Ovary (tissue), 10 donors: ENCODE measurements at regions of chr21 and their contacts with region 1.

Region 1: DNA sequence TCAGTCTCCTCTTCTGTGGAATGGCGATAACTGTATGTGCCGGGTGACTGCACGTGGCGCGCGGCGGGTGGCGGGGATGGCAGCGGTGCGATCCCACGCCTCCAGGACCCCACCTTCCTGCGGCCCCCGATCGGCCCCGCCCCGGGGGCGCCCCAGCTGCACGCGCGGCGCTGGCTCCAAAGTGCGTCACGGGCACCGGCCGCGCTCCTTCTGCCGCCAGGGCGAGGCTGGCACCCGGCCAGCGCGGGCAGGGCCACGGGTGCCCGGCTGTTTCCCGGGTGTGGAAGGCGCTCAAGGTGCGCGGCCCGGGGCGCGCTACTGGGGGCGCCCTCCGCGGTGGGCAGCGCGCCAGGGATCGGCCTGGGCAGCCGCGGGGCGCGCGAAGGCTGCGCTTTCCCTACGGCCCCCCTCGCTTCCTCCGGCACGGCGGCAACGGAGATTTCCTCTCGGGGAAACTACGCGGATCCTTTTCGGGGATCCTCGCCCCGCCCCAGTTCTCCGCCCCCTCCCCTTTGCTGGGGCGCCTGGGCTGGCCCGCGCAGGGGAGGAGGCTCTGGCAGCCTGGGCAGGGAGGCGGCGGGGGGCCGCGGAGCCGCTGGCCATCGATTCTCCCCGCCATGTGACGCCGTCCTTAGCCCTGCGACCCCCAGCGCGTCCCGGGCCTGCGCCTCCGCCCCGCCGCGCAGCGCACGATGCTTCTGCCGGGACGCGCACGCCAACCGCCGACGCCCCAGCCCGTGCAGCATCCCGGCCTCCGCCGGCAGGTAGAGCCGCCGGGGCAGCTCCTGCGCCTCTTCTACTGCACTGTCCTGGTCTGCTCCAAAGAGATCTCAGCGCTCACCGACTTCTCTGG is at the start of gene EVA1C:
- DNase-seq: peak; percentile 71 to 86 (median 79)
- H3K4me3 ChIP-seq: peak within 1 kb of the TSS; percentile 59
- H3K27ac ChIP-seq: peak within 1 kb of the TSS; percentile 96 to 99
- H3K4me1 ChIP-seq: peaks cover 9% of the 10 kb centered on the region
- H3K27me3 ChIP-seq: no peaks in the 10 kb centered on the region
- CTCF ChIP-seq: peak in 1 of 3 donors; percentile 75
- EP300 ChIP-seq: no peak
- POLR2A ChIP-seq: peak; percentile 28
- total RNA-seq, gene EVA1C: 27.1 to 156 (median 49.6) TPM

Region 2: GRCh38 chr21:32261929-32262328 is 150.5 kb before region 1 on chr21:
- intact Hi-C with region 1: no loop called
- DNase-seq: no peak
- H3K4me3 ChIP-seq: no peak overlapping the region
- H3K27ac ChIP-seq: no peak overlapping the region
- H3K4me1 ChIP-seq: no peaks in the 10 kb centered on the region
- H3K27me3 ChIP-seq: no peaks in the 10 kb centered on the region
- CTCF ChIP-seq: no peak
- EP300 ChIP-seq: no peak
- POLR2A ChIP-seq: no peak

Region 3: GRCh38 chr21:32457360-32457840 is 45.0 kb after region 1 on chr21:
- intact Hi-C with region 1: loop called in 2 of 4 experiments (anchors 5 kb)
- DNase-seq: peak; percentile 48 to 68 (median 62)
- H3K4me3 ChIP-seq: no peak overlapping the region
- H3K27ac ChIP-seq: peak overlapping the region; percentile 60 to 70
- H3K4me1 ChIP-seq: peaks cover 18% of the 10 kb centered on the region
- H3K27me3 ChIP-seq: no peaks in the 10 kb centered on the region
- CTCF ChIP-seq: peak in 1 of 3 donors; percentile 5
- EP300 ChIP-seq: no peak
- POLR2A ChIP-seq: no peak

Region 4: GRCh38 chr21:32520875-32521735 is 108.7 kb after region 1 on chr21:
- intact Hi-C with region 1: loop called in 1 of 4 experiments (anchors 5 kb)
- DNase-seq: peak; percentile 84 to 91 (median 91)
- H3K4me3 ChIP-seq: no peak overlapping the region
- H3K27ac ChIP-seq: peak overlapping the region; percentile 25 to 33
- H3K4me1 ChIP-seq: peaks cover 7% of the 10 kb centered on the region
- H3K27me3 ChIP-seq: no peaks in the 10 kb centered on the region
- CTCF ChIP-seq: no peak
- EP300 ChIP-seq: peak; percentile 35
- POLR2A ChIP-seq: no peak

Region 5: GRCh38 chr21:32562426-32562825 is 150.0 kb after region 1 on chr21:
- intact Hi-C with region 1: loop called in 2 of 4 experiments (anchors 5 kb)
- DNase-seq: peak; percentile 55 to 73 (median 63)
- H3K4me3 ChIP-seq: no peak overlapping the region
- H3K27ac ChIP-seq: peak overlapping the region in 1 of 2 donors; percentile 28
- H3K4me1 ChIP-seq: peaks cover 1% of the 10 kb centered on the region
- H3K27me3 ChIP-seq: no peaks in the 10 kb centered on the region
- CTCF ChIP-seq: peak in 2 of 3 donors; percentile 46 to 55
- EP300 ChIP-seq: no peak
- POLR2A ChIP-seq: no peak